CD4-positive, alpha-beta memory T cell (primary cell): ENCODE measurements at regions of chr9 and their contacts with region 1.

Region 1: DNA sequence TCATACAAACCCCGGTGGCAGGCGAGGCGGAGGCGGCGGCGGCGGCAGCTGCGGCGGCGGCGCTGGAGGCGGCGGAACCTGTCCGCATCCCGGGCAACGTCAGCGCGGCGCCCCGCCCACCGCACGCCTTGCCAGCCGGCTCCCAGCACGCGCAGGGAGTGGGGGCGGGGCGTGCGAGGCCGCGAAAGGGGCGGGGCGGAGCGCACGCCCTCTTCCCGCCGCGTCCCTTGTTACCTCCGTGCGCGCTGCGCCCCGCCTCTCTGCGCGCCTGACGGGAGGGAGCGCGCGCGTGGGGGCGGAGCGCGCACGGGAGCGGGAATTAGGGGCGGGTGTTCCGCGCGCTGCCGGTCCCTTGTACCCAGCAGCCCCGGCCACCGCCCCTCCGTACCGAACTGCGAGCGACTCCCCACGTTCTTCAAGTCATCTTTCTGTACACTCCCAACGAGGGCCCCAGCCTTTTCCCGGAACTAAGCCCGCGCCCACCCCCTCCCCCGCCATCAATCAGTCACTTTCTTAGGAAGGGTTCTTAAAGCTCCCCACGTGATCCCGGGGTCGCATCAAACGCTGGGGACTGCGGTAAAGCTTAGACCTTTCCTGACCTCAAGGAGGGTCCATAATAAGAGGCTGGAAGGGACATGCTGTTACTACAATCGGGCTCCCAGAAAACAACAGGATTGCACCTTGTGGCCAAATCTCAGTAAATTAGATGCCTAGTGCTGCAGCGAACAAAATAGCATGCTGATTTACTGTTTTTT is at the start of gene AGTPBP1:
- DNase-seq: peak; percentile 94 to 97 (median 97)
- H3K4me3 ChIP-seq: peak within 1 kb of the TSS; percentile 67 to 75
- H3K4me3 Mint-ChIP-seq: peak within 1 kb of the TSS; percentile 93 to 98 (median 96)
- H3K27ac ChIP-seq: peak within 1 kb of the TSS; percentile 93
- H3K27ac Mint-ChIP-seq: peak within 1 kb of the TSS; percentile 94 to 99 (median 98)
- H3K4me1 ChIP-seq: peaks cover 31% of the 10 kb centered on the region
- H3K4me1 Mint-ChIP-seq: peaks cover 22 to 39% (median 31%) of the 10 kb centered on the region in 4 donors
- H3K27me3 ChIP-seq: no peaks in the 10 kb centered on the region
- H3K27me3 Mint-ChIP-seq: peaks cover 0 to 6% of the 10 kb centered on the region in 2 donors
- total RNA-seq, gene AGTPBP1: 56.1 to 56.7 TPM

Region 2: DNA sequence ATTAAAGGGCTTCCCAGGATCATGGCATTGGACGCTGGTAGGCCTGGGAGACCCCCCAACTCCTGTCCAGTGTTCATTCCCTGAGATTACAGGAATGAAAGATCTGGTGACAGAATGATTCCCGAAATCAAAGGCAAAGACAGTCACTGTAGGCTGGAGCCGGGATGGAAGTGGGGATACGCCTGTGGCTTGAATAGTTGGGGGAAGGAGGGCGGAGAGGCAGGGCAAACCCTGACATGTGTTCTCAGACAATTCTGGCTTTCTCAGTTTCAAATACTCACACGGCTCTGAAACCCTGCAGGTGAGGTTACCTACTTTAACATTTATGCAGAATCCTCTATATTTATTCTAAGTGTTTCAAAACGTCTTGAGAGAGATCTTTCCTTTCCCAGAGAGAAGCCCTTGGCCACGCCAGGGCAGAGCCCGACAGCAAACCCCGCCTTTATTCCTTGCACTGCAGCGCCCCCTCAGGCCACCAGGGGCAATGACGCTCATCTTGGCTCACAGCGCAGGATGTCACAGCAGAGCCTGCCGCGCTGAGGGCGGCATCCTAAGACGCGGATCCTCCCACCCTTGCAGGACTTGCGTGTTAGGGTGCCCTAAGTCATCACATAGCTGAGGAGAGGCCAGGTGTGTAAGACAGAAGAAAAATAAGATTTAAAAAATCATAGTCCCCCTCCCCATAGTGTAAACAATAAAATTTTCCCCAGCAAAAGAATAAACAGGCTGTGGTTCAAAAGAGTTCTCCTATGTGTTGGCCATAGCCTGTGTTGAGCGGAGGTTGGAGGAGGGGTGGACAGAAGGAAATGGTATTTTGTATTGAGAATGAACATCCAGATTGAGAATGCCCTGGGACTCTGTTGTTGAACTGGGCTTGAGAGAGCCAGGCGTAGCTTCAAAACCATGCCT is 788.0 kb before region 1 on chr9:
- CTCF ChIA-PET with region 1: no interaction called
- POLR2A ChIA-PET with region 1: no interaction called
- intact Hi-C with region 1: no loop called
- DNase-seq: peak in 3 of 5 donors; percentile 13 to 15 (median 13)
- H3K4me3 ChIP-seq: no peak overlapping the region
- H3K4me3 Mint-ChIP-seq: no peak overlapping the region
- H3K27ac ChIP-seq: no peak overlapping the region
- H3K27ac Mint-ChIP-seq: no peak overlapping the region
- H3K4me1 ChIP-seq: no peaks in the 10 kb centered on the region
- H3K4me1 Mint-ChIP-seq: peaks cover 0 to 7% (median 3%) of the 10 kb centered on the region in 4 donors
- H3K27me3 ChIP-seq: no peaks in the 10 kb centered on the region
- H3K27me3 Mint-ChIP-seq: peaks cover 9 to 13% of the 10 kb centered on the region in 2 donors

Region 3: GRCh38 chr9:85600675-85601263 is 141.3 kb before region 1 on chr9:
- CTCF ChIA-PET with region 1: no interaction called
- POLR2A ChIA-PET with region 1: no interaction called
- intact Hi-C with region 1: no loop called
- DNase-seq: peak in 2 of 5 donors; percentile 2 to 3
- H3K4me3 ChIP-seq: no peak overlapping the region
- H3K4me3 Mint-ChIP-seq: no peak overlapping the region
- H3K27ac ChIP-seq: no peak overlapping the region
- H3K27ac Mint-ChIP-seq: peak overlapping the region in 2 of 7 donors; percentile 66 to 67
- H3K4me1 ChIP-seq: no peaks in the 10 kb centered on the region
- H3K4me1 Mint-ChIP-seq: peaks cover 4 to 17% (median 12%) of the 10 kb centered on the region in 4 donors
- H3K27me3 ChIP-seq: no peaks in the 10 kb centered on the region
- H3K27me3 Mint-ChIP-seq: no peaks in the 10 kb centered on the region

Region 4: GRCh38 chr9:85702726-85703289 is 39.2 kb before region 1 on chr9:
- CTCF ChIA-PET with region 1: interaction called, 32 read pairs
- POLR2A ChIA-PET with region 1: interaction called, 7 read pairs
- intact Hi-C with region 1: loop called (anchors 2 kb)
- DNase-seq: no peak
- H3K4me3 ChIP-seq: no peak overlapping the region
- H3K4me3 Mint-ChIP-seq: no peak overlapping the region
- H3K27ac ChIP-seq: no peak overlapping the region
- H3K27ac Mint-ChIP-seq: peak overlapping the region in 1 of 7 donors; percentile 24
- H3K4me1 ChIP-seq: no peaks in the 10 kb centered on the region
- H3K4me1 Mint-ChIP-seq: peaks cover 22 to 48% (median 30%) of the 10 kb centered on the region in 4 donors
- H3K27me3 ChIP-seq: no peaks in the 10 kb centered on the region
- H3K27me3 Mint-ChIP-seq: no peaks in the 10 kb centered on the region

Region 5: DNA sequence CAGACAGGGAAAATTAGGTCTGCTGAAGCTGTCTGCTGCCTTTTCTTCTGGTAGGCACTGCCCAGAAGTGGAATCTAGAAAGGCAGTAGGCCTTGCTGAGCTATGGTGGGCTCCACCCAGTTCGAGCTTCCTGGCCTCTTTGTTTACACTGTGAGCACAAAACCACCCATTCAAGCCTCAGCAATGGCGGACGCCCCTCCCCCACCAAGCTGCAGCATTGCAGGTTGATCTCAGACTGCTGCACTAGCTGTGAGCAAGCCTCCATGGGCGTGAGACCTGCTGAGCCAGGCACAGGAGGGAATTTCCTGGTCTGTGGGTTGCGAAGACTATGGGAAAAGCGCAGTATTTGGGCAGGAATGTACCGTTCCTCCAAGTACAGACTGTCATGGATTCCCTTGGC is 18.8 kb before region 1 on chr9:
- CTCF ChIA-PET with region 1: interaction called, 20 read pairs
- POLR2A ChIA-PET with region 1: interaction called, 60 read pairs
- intact Hi-C with region 1: loop called (anchors 1 kb)
- DNase-seq: peak; percentile 67 to 80 (median 71)
- H3K4me3 ChIP-seq: no peak overlapping the region
- H3K4me3 Mint-ChIP-seq: peak overlapping the region; percentile 18 to 77 (median 70)
- H3K27ac ChIP-seq: peak overlapping the region; percentile 31
- H3K27ac Mint-ChIP-seq: peak overlapping the region; percentile 63 to 90 (median 87)
- H3K4me1 ChIP-seq: peaks cover 39% of the 10 kb centered on the region
- H3K4me1 Mint-ChIP-seq: peaks cover 45 to 84% (median 68%) of the 10 kb centered on the region in 4 donors
- H3K27me3 ChIP-seq: no peaks in the 10 kb centered on the region
- H3K27me3 Mint-ChIP-seq: no peaks in the 10 kb centered on the region

Region 6: GRCh38 chr9:86282077-86282978 is 540.3 kb after region 1 on chr9 and contains the start of gene ISCA1:
- CTCF ChIA-PET with region 1: no interaction called
- POLR2A ChIA-PET with region 1: interaction called, 5 read pairs
- intact Hi-C with region 1: loop called (anchors 1 kb)
- DNase-seq: peak; percentile 97 to 100 (median 97)
- H3K4me3 ChIP-seq: peak within 1 kb of the TSS; percentile 93 to 94
- H3K4me3 Mint-ChIP-seq: peak within 1 kb of the TSS; percentile 87 to 98 (median 96)
- H3K27ac ChIP-seq: peak within 1 kb of the TSS; percentile 96
- H3K27ac Mint-ChIP-seq: peak within 1 kb of the TSS; percentile 91 to 100 (median 99)
- H3K4me1 ChIP-seq: peaks cover 45% of the 10 kb centered on the region
- H3K4me1 Mint-ChIP-seq: peaks cover 31 to 48% (median 39%) of the 10 kb centered on the region in 4 donors
- H3K27me3 ChIP-seq: no peaks in the 10 kb centered on the region
- H3K27me3 Mint-ChIP-seq: no peaks in the 10 kb centered on the region
- total RNA-seq, gene ISCA1: 34.6 to 37.2 TPM